ENCODE measurements at regions of chr22 and their contacts with region 1.

Region 1: GRCh38 chr22:35299673-35300497 is at the start of gene TOM1:
- DNase-seq: peak; percentile 97
- ATAC-seq: peak; percentile 96
- H3K4me3 ChIP-seq: peak within 1 kb of the TSS; percentile 73 to 90 (median 76)
- H3K27ac ChIP-seq: peak within 1 kb of the TSS; percentile 91
- H3K4me1 ChIP-seq: peaks cover 37% of the 10 kb centered on the region
- H3K27me3 ChIP-seq: no peaks in the 10 kb centered on the region; a peak in 1 of 5 replicates
- CTCF ChIP-seq: no peak; the same call in 1 of the 2 replicates
- EP300 ChIP-seq: no peak; a peak in 1 of 4 replicates
- POLR2A ChIP-seq: peak; percentile 88 to 95
- RAD21 ChIP-seq: no peak; the same call in 1 of the 2 replicates
- total RNA-seq, gene TOM1: 26.0 and 30.8 TPM in 2 replicates

Region 2: GRCh38 chr22:35257321-35258190 is 42.3 kb before region 1 on chr22 and contains the start of gene HMGXB4:
- CTCF ChIA-PET with region 1: no interaction called
- POLR2A ChIA-PET with region 1: interaction called, 28 read pairs
- in situ Hi-C with region 1: no loop called
- intact Hi-C with region 1: no loop called
- DNase-seq: peak; percentile 76
- ATAC-seq: peak; percentile 95
- H3K4me3 ChIP-seq: peak within 1 kb of the TSS; percentile 75 to 89 (median 76)
- H3K27ac ChIP-seq: peak within 1 kb of the TSS; percentile 89
- H3K4me1 ChIP-seq: peaks cover 26% of the 10 kb centered on the region
- H3K27me3 ChIP-seq: no peaks in the 10 kb centered on the region; a peak in 1 of 5 replicates
- CTCF ChIP-seq: peak; percentile 45
- EP300 ChIP-seq: no peak
- POLR2A ChIP-seq: peak; percentile 54 to 58; a peak in 3 of 4 replicates
- RAD21 ChIP-seq: no peak
- total RNA-seq, gene HMGXB4: 13.9 and 14.4 TPM in 2 replicates

Region 3: GRCh38 chr22:35313311-35314121 is 13.6 kb after region 1 on chr22:
- CTCF ChIA-PET with region 1: no interaction called
- POLR2A ChIA-PET with region 1: interaction called, 126 read pairs
- in situ Hi-C with region 1: no loop called
- intact Hi-C with region 1: loop called (anchors 1 kb)
- DNase-seq: peak; percentile 70
- ATAC-seq: peak; percentile 13; the same call in 1 of the 3 replicates
- H3K4me3 ChIP-seq: no peak overlapping the region
- H3K27ac ChIP-seq: peak overlapping the region; percentile 82
- H3K4me1 ChIP-seq: peaks cover 47% of the 10 kb centered on the region
- H3K27me3 ChIP-seq: no peaks in the 10 kb centered on the region
- CTCF ChIP-seq: no peak
- EP300 ChIP-seq: no peak
- POLR2A ChIP-seq: peak in 1 of 2 experiments; percentile 15; a peak in 1 of 4 replicates
- RAD21 ChIP-seq: no peak

Region 4: DNA sequence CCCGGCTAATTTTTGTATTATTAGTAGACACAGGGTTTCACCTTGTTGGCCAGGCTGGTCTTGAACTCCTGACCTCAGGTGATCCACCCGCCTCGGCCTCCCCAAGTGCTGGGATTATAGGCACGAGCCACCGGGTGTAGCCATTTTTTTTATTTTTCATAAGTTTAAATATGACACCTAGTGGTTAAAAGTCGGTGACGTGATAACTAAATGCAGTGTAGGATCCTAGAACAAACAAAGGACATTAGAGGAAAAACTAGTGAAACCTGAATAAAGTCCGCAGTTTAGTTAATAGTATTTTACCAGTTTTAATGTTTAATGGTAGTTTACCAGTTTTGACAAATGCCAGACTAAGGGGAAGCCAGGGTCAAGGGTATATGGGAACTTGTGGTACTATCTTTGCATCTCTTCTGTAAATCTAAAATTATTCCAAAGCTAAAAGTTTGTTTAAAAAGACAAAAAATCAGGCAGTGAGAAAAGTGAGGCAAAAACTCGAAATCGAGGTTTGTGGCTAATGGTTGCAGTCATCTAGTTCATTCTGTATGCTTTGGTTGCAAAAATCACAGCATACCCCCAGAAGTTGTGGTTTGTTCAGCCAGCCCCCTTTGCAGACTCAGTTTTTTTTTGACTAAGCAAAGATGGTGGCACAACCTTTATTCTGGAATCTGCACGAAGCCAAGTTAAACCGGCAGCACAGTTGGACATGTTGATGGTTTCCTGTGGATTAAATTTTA is 29.4 kb after region 1 on chr22:
- CTCF ChIA-PET with region 1: no interaction called
- POLR2A ChIA-PET with region 1: interaction called, 49 read pairs
- in situ Hi-C with region 1: no loop called
- intact Hi-C with region 1: loop called (anchors 1 kb)
- DNase-seq: no peak
- ATAC-seq: no peak
- H3K4me3 ChIP-seq: no peak overlapping the region
- H3K27ac ChIP-seq: peak overlapping the region; percentile 92
- H3K4me1 ChIP-seq: peaks cover 53% of the 10 kb centered on the region
- H3K27me3 ChIP-seq: no peaks in the 10 kb centered on the region
- CTCF ChIP-seq: 0 out of 2 replicates have a peak, but pooled peaks have one; percentile 16
- EP300 ChIP-seq: no peak
- POLR2A ChIP-seq: no peak
- RAD21 ChIP-seq: no peak